ENCODE measurements at regions of chr5 and their contacts with region 1.

Region 1: GRCh38 chr5:44952376-44952775 is 143.6 kb downstream of the MRPS30 start:
- DNase-seq: no peak
- ATAC-seq: no peak

Region 2: GRCh38 chr5:44708611-44709010 is 243.8 kb before region 1 on chr5:
- intact Hi-C with region 1: no loop called
- DNase-seq: no peak
- ATAC-seq: no peak

Region 3: DNA sequence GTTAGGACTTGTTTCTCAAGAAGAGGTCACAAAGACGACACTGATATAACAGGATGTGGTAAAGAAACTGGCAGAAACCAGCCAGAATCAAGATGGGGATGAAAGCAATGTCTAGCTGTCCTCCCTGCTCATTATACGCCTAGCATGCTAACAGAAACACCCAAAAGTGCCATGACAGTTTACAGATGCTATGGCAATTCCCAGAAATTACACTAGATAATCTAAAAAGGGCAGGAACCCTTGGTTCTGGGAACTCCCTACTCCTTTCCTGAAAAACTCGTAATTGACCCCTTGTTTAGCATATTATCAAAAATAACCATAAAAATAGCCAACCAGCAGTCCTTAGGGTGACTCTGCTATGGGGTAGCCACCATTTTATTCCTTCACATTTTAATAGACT is 154.5 kb before region 1 on chr5:
- intact Hi-C with region 1: no loop called
- DNase-seq: no peak
- ATAC-seq: no peak

Region 4: DNA sequence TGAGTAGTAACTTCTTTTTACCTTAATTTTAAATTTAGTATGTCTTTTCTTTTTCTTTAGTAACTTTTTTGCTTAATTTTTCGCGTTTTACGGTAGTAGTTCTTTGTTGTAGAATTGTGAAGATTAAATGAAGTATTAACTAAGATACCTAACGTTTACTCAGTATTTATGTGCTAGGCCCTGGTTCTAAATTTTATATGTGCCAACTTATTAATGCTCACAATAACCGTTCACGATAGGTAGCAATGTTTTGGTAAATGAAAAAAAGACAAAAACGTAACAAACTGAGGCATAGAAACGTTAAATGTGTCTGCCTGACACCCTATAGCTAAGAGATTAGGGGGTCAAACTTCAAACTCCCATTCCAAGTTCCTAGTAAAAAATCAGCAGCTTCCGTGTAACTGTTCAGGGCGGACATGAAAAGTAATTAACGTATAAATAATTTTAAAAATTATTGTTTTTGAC is 142.4 kb before region 1 on chr5:
- intact Hi-C with region 1: no loop called
- DNase-seq: no peak
- ATAC-seq: no peak

Region 5: GRCh38 chr5:45774528-45774927 is 822.2 kb after region 1 on chr5:
- intact Hi-C with region 1: loop called (anchors 10 kb)
- DNase-seq: no peak
- ATAC-seq: no peak